Stomach (tissue), 19 donors: ENCODE measurements at regions of chr11 and their contacts with region 1.

Region 1: GRCh38 chr11:70467201-70468085 is 69.1 kb downstream of the CTTN start:
- DNase-seq: peak; percentile 74 to 75
- H3K4me3 ChIP-seq: no peak overlapping the region
- H3K27ac ChIP-seq: no peak overlapping the region
- H3K4me1 ChIP-seq: peaks cover 0 to 16% (median 0%) of the 10 kb centered on the region in 4 donors
- H3K27me3 ChIP-seq: peaks cover 0 to 28% (median 3%) of the 10 kb centered on the region in 3 donors
- CTCF ChIP-seq: peak in 5 of 7 experiments; percentile 62 to 83 (median 75)
- EP300 ChIP-seq: no peak
- POLR2A ChIP-seq: no peak

Region 2: DNA sequence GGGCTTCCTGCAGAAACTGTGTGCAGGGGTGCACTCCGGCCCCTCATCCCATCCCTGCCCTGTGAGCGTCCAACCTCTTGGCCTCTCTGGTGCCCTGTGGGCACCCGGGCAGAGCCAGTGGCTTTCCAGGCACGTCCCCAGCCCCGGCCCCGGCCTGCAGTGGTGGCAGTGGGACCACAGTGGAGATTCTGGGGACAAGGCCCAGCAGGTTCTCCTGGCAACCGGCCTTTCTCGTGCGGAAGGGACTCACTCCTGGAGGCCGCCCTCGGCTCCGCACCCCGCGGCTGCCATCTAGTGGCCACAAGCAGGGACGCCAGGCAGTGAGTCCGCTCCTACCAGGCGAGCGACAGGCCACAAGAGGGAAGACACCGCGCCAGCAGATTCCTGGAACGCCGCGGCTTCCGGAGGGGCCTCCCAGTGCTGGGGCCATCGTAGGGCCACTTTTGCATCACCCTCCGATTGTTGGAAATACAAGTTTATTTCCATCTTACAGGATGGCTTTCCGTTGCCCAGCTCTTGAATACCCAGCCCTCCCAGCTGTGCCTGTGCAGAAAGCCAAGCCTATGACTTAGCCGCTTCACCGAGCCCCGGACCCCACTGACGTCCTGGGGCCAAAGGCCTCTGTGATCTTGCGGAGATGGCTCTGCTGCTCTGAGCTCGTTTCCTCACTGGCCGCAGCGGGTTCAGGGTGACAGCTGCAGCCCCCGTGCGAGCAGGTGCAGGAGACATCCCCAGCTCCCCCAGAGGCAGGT is 288.1 kb after region 1 on chr11:
- intact Hi-C with region 1: loop called (anchors 5 kb)
- DNase-seq: peak; percentile 85 to 91
- H3K4me3 ChIP-seq: no peak overlapping the region
- H3K27ac ChIP-seq: no peak overlapping the region
- H3K4me1 ChIP-seq: peaks cover 0 to 9% (median 6%) of the 10 kb centered on the region in 4 donors
- H3K27me3 ChIP-seq: peaks cover 0 to 20% (median 0%) of the 10 kb centered on the region in 3 donors
- CTCF ChIP-seq: peak in 6 of 7 experiments; percentile 71 to 97 (median 90)
- EP300 ChIP-seq: no peak
- POLR2A ChIP-seq: no peak